Left ventricle myocardium superior (tissue), 1 donor: ENCODE measurements at regions of chr5 and their contacts with region 1.

Region 1: GRCh38 chr5:127040796-127041520 is 10.6 kb upstream of the MARCHF3 start:
- DNase-seq: no peak
- ATAC-seq: peak; percentile 66

Region 2: GRCh38 chr5:126615286-126615685 is 425.7 kb before region 1 on chr5:
- intact Hi-C with region 1: no loop called
- DNase-seq: no peak
- ATAC-seq: no peak

Region 3: GRCh38 chr5:126846344-126846743 is 194.6 kb before region 1 on chr5:
- intact Hi-C with region 1: loop called (anchors 5 kb)
- DNase-seq: no peak
- ATAC-seq: no peak